Heart right ventricle (tissue), 16 donors: ENCODE measurements at regions of chr13 and their contacts with region 1.

Region 1: DNA sequence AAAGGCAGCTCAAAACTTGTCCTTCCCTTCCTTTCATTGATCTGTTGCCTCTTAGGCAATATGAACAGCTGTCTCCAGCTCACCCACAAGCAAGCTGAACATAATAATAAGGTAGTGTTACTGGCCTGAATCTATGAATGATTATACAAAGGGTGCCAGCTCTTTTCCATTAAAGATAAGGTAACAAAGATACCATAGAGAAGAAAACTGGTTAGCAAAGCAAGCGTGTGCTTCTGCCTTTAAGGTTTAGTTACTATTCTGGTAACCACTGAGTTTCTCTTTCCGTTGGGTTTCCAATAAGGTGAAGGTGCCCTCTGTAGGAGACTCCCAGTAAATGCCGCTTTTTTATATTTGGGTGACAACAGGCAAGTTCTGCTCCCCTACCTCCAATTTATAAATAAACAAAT is 12.1 kb upstream of the DACH1 start:
- DNase-seq: peak in 1 of 2 donors; percentile 11
- ATAC-seq: peak in 6 of 8 donors; percentile 75 to 88 (median 79)
- H3K4me3 ChIP-seq: peak overlapping the region in 2 of 10 donors; percentile 25 to 32
- H3K27ac ChIP-seq: peak overlapping the region in 3 of 10 donors; percentile 24 to 45 (median 36)
- H3K4me1 ChIP-seq: peaks cover 0 to 15% (median 4%) of the 10 kb centered on the region in 9 donors
- H3K27me3 ChIP-seq: no peaks in the 10 kb centered on the region
- CTCF ChIP-seq: peak; percentile 32 to 79 (median 62)

Region 2: DNA sequence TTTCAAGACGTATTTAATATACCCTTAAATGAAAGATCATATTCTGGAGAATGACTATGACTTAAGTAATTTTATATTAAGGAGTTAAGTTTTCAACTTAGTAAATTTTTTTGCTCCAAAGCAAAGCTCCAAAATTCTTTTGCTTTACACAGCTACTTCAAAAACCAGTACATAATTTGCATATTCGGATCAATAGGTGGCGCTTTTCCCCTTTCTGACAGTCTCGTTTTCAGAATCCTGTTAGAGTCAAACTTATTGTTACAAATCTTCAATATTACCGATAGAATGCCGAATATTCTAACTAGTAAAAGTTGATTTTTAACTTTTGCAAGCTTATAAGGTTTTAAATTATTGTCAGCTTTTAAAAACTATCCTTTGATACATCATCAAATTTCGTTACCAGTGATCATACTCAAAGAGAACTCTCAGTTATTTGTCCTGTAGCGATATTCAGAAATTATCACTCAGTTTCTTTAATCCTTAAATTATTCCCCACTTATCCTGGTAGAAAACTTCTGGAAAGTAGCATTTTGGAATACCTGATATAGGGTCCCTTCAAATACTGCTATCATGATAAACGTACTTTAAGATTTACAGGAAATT is 918.2 kb before region 1 on chr13:
- intact Hi-C with region 1: loop called in 3 of 10 experiments (anchors 5 to 10 kb)
- DNase-seq: no peak
- ATAC-seq: no peak
- H3K4me3 ChIP-seq: no peak overlapping the region
- H3K27ac ChIP-seq: no peak overlapping the region
- H3K4me1 ChIP-seq: no peaks in the 10 kb centered on the region
- H3K27me3 ChIP-seq: no peaks in the 10 kb centered on the region
- CTCF ChIP-seq: peak; percentile 22 to 75 (median 60)

Region 3: GRCh38 chr13:71285700-71286099 is 593.4 kb before region 1 on chr13:
- intact Hi-C with region 1: loop called in 3 of 10 experiments (anchors 5 to 10 kb)
- DNase-seq: no peak
- ATAC-seq: no peak
- H3K4me3 ChIP-seq: no peak overlapping the region
- H3K27ac ChIP-seq: no peak overlapping the region
- H3K4me1 ChIP-seq: peaks cover 0 to 3% (median 0%) of the 10 kb centered on the region in 9 donors
- H3K27me3 ChIP-seq: no peaks in the 10 kb centered on the region
- CTCF ChIP-seq: peak in 6 of 9 donors; percentile 27 to 56 (median 33)

Region 4: GRCh38 chr13:71303144-71303543 is 576.0 kb before region 1 on chr13:
- intact Hi-C with region 1: loop called in 6 of 10 experiments (anchors 5 to 10 kb)
- DNase-seq: no peak
- ATAC-seq: no peak
- H3K4me3 ChIP-seq: no peak overlapping the region
- H3K27ac ChIP-seq: no peak overlapping the region
- H3K4me1 ChIP-seq: peaks cover 0 to 5% (median 0%) of the 10 kb centered on the region in 9 donors
- H3K27me3 ChIP-seq: no peaks in the 10 kb centered on the region
- CTCF ChIP-seq: peak in 5 of 9 donors; percentile 19 to 52 (median 35)

Region 5: GRCh38 chr13:71524613-71525304 is 354.4 kb before region 1 on chr13:
- intact Hi-C with region 1: loop called in 1 of 10 experiments (anchors 10 kb)
- DNase-seq: no peak
- ATAC-seq: no peak
- H3K4me3 ChIP-seq: peak overlapping the region in 2 of 10 donors; percentile 13 to 26
- H3K27ac ChIP-seq: peak overlapping the region in 4 of 10 donors; percentile 5 to 46 (median 31)
- H3K4me1 ChIP-seq: peaks cover 0 to 41% (median 5%) of the 10 kb centered on the region in 9 donors
- H3K27me3 ChIP-seq: no peaks in the 10 kb centered on the region
- CTCF ChIP-seq: no peak

Region 6: GRCh38 chr13:72097568-72097967 is 218.4 kb after region 1 on chr13:
- intact Hi-C with region 1: no loop called
- DNase-seq: no peak
- ATAC-seq: no peak
- H3K4me3 ChIP-seq: no peak overlapping the region
- H3K27ac ChIP-seq: no peak overlapping the region
- H3K4me1 ChIP-seq: no peaks in the 10 kb centered on the region
- H3K27me3 ChIP-seq: no peaks in the 10 kb centered on the region
- CTCF ChIP-seq: no peak